HepG2 (cell line): ENCODE measurements at regions of chr6 and their contacts with region 1.

Region 1: GRCh38 chr6:11232193-11232769 is at the start of gene NEDD9:
- DNase-seq: peak; percentile 98
- ATAC-seq: peak; percentile 96
- H3K4me3 ChIP-seq: peak within 1 kb of the TSS; percentile 80 to 94 (median 87)
- H3K27ac ChIP-seq: peak within 1 kb of the TSS; percentile 94
- H3K4me1 ChIP-seq: peaks cover 52% of the 10 kb centered on the region
- H3K27me3 ChIP-seq: peaks cover 0 to 4% of the 10 kb centered on the region in 2 experiments; a peak in 2 of 5 replicates
- CTCF ChIP-seq: peak; percentile 48
- EP300 ChIP-seq: no peak; a peak in 2 of 4 replicates
- POLR2A ChIP-seq: peak; percentile 98 to 100
- RAD21 ChIP-seq: peak; percentile 50; the same call in 1 of the 2 replicates
- total RNA-seq, gene NEDD9: 27.1 and 31.4 TPM in 2 replicates

Region 2: DNA sequence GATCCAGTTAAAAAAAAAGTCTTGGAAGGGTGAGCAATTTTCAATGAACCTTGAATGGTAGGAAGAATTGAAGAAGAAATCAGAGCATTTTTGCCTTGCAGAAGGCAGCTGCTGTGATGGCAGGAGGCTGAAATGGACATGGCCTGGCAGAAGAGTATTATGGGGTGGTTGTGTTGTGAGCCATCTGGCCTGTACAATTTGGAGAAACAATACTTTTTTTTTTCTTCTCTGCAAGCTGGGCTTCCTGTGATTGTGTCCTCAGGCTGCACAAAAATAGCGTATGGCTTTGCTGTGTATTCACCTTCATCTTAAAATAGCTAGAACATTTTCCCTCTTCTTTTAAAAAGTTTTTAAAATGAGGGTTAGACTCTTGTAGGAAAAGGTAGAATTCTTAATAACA is 324.1 kb before region 1 on chr6:
- CTCF ChIA-PET with region 1: no interaction called
- POLR2A ChIA-PET with region 1: no interaction called
- in situ Hi-C with region 1: no loop called
- intact Hi-C with region 1: no loop called
- DNase-seq: no peak
- ATAC-seq: no peak
- H3K4me3 ChIP-seq: no peak overlapping the region
- H3K27ac ChIP-seq: no peak overlapping the region
- H3K4me1 ChIP-seq: no peaks in the 10 kb centered on the region
- H3K27me3 ChIP-seq: peaks cover 0 to 4% of the 10 kb centered on the region in 2 experiments; a peak in 1 of 5 replicates
- CTCF ChIP-seq: no peak
- EP300 ChIP-seq: no peak
- POLR2A ChIP-seq: no peak
- RAD21 ChIP-seq: no peak

Region 3: GRCh38 chr6:11144393-11144851 is 87.9 kb before region 1 on chr6:
- CTCF ChIA-PET with region 1: no interaction called
- POLR2A ChIA-PET with region 1: no interaction called
- in situ Hi-C with region 1: no loop called
- intact Hi-C with region 1: loop called (anchors 5 kb)
- DNase-seq: peak; percentile 77
- ATAC-seq: peak; percentile 94
- H3K4me3 ChIP-seq: no peak overlapping the region
- H3K27ac ChIP-seq: no peak overlapping the region
- H3K4me1 ChIP-seq: peaks cover 16% of the 10 kb centered on the region
- H3K27me3 ChIP-seq: no peaks in the 10 kb centered on the region
- CTCF ChIP-seq: peak; percentile 99
- EP300 ChIP-seq: no peak
- POLR2A ChIP-seq: no peak
- RAD21 ChIP-seq: peak; percentile 95

Region 4: GRCh38 chr6:11207199-11207968 is 24.9 kb before region 1 on chr6:
- CTCF ChIA-PET with region 1: no interaction called
- POLR2A ChIA-PET with region 1: interaction called, 85 read pairs
- in situ Hi-C with region 1: no loop called
- intact Hi-C with region 1: loop called (anchors 1 kb)
- DNase-seq: peak; percentile 98
- ATAC-seq: peak; percentile 53
- H3K4me3 ChIP-seq: no peak overlapping the region
- H3K27ac ChIP-seq: peak overlapping the region; percentile 68
- H3K4me1 ChIP-seq: peaks cover 100% of the 10 kb centered on the region
- H3K27me3 ChIP-seq: no peaks in the 10 kb centered on the region
- CTCF ChIP-seq: no peak
- EP300 ChIP-seq: peak; percentile 78 to 88
- POLR2A ChIP-seq: no peak; a peak in 1 of 4 replicates
- RAD21 ChIP-seq: no peak

Region 5: GRCh38 chr6:11277275-11278206 is 45.3 kb after region 1 on chr6:
- CTCF ChIA-PET with region 1: no interaction called
- POLR2A ChIA-PET with region 1: interaction called, 13 read pairs
- in situ Hi-C with region 1: no loop called
- intact Hi-C with region 1: loop called (anchors 2 kb)
- DNase-seq: peak; percentile 90
- ATAC-seq: peak; percentile 54
- H3K4me3 ChIP-seq: peak overlapping the region in 1 of 3 experiments; percentile 18; a peak in 1 of 6 replicates
- H3K27ac ChIP-seq: peak overlapping the region; percentile 2
- H3K4me1 ChIP-seq: peaks cover 67% of the 10 kb centered on the region
- H3K27me3 ChIP-seq: no peaks in the 10 kb centered on the region
- CTCF ChIP-seq: no peak
- EP300 ChIP-seq: peak in 1 of 2 experiments; percentile 56; a peak in 1 of 4 replicates
- POLR2A ChIP-seq: no peak
- RAD21 ChIP-seq: no peak

Region 6: DNA sequence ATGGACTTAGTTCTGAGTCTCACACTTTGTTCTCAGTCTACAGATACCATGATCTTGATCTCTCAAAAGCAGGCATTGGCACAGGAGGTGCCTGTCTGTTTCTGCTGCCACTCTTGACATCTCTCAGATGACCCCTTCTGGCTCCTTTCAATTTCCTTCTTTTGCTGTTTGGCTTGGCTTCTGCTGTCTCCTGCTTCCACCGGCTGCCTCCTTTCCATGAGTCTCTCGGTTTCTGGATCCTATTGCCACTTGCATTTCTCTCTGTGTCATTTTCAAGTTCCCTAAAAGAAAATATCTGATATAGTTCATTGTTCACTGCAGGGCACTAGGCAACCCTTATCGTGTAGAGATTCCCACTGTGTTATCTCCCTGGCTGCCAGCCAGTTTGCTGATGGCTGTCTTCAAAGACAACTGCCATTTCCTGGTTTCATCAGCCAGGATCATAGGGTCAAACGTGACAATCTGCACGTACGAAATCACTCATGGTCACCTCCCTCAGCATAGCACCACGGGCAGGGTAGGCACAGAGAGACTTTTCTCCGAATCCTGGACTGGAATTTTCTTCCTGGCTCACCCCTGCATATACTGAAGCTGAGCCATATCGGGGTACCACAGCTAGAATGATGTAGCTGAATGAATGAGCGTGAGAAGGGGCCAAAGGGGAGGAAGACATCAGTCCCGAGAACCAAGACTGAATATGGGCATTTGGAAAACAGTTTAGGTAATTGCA is 160.7 kb after region 1 on chr6:
- CTCF ChIA-PET with region 1: no interaction called
- POLR2A ChIA-PET with region 1: interaction called, 24 read pairs
- in situ Hi-C with region 1: no loop called
- intact Hi-C with region 1: loop called (anchors 1 kb)
- DNase-seq: peak; percentile 100
- ATAC-seq: peak; percentile 85
- H3K4me3 ChIP-seq: peak overlapping the region in 1 of 3 experiments; percentile 39; a peak in 2 of 6 replicates
- H3K27ac ChIP-seq: peak overlapping the region; percentile 98
- H3K4me1 ChIP-seq: peaks cover 97% of the 10 kb centered on the region
- H3K27me3 ChIP-seq: no peaks in the 10 kb centered on the region
- CTCF ChIP-seq: peak; percentile 17; the same call in 1 of the 2 replicates
- EP300 ChIP-seq: peak; percentile 89 to 100
- POLR2A ChIP-seq: peak; percentile 63 to 66; a peak in 3 of 4 replicates
- RAD21 ChIP-seq: no peak

Region 7: GRCh38 chr6:11496152-11497060 is 264.1 kb after region 1 on chr6:
- CTCF ChIA-PET with region 1: interaction called, 3 read pairs
- POLR2A ChIA-PET with region 1: interaction called, 5 read pairs
- in situ Hi-C with region 1: loop called (anchors 5 kb)
- intact Hi-C with region 1: loop called (anchors 1 kb)
- DNase-seq: peak; percentile 91
- ATAC-seq: peak; percentile 91
- H3K4me3 ChIP-seq: no peak overlapping the region
- H3K27ac ChIP-seq: peak overlapping the region; percentile 10
- H3K4me1 ChIP-seq: peaks cover 72% of the 10 kb centered on the region
- H3K27me3 ChIP-seq: no peaks in the 10 kb centered on the region
- CTCF ChIP-seq: peak; percentile 95
- EP300 ChIP-seq: peak in 1 of 2 experiments; percentile 34; a peak in 1 of 4 replicates
- POLR2A ChIP-seq: no peak
- RAD21 ChIP-seq: peak; percentile 98